ENCODE measurements at regions of chr10 and their contacts with region 1.

Region 1: DNA sequence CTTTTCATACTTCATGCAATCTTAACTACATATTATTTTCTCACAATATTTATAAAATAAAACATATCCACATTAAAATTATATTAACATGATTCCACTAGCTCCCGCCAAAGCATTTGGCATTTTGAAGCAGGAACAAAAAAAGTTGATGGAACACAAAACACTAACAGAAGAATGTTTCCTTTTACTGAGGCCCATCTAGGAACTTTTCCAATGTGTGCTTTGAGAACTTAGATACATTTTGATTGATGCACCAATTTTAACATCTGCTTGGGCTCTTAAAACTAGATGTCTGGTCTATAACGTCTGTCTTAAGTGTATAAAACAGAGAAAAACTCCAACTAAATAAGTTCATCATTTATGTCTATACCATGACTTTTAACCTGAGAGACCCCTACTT is 1214.8 kb downstream of the SORCS1 start:
- DNase-seq: no peak
- ATAC-seq: no peak

Region 2: DNA sequence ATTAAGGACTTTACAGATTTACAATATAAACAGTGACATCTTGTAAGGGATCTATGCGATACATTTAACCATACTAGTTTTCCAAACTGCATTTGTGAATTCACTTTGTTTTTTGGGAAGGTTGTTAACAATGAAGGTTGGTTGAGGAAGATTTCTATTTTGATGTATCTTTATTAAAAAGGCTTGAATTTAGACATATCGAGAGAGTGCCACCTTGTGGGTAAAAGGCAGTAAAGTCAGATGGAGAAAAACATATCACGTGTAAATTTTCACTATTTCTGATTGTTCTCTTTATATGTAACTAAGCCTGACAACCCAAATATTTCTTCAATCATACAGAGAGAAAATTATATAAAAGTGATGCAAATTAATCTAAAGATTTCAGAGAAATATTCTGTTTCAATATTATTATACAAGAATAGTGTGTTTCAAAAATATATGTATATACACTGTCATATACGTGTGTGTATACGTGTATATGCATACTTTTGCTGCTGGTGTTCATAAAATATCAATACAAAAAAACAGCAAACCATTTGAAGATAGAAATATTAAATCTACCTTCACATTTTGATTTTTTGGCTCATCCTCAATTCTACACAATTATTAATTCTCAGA is 226.1 kb after region 1 on chr10:
- intact Hi-C with region 1: loop called (anchors 10 kb)
- DNase-seq: no peak
- ATAC-seq: no peak